ENCODE measurements at regions of chr2 and their contacts with region 1.

Region 1: DNA sequence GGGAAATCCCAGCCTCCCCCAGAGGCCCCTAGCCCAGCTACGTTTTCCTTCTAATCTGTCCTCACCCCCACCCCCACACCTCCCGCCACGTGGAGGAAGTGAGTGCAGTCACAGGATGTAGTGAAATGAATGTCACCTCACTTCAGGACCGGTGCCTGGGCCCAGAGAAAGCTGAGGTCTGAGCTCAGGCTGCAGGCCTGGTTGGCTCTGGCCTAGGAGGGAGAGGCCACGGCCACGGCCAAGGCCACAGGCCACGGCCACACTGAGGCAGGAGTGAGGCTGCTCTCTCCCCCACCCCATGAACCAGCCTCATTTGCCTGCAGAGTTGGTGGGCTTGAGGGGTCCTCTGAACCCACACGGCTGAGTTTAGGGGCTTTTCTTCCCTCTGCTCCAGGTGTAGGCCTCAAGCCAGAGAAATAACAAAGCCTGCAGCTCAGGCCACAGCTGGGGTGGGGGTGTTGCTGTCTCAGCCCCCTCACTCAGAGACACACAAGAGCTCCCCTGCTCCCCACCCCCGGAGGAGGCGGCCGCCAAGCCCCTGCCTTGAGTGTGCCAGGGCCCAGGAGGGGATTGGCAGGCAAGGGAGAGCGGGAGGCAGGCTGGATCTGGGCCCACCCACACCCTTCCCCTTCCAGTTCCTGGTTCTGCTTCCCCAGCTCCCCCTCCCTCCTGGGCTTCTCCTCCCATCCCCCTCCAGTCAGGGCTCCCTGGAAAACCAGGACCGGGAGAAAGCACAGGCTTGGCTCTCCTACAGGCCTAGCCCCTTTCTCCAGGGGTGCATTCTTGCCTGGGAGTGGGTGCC is 27.0 kb downstream of the DNMT3A start:
- DNase-seq: peak; percentile 35 to 79 (median 61)
- ATAC-seq: peak; percentile 87
- H3K4me3 ChIP-seq: peak overlapping the region; percentile 50
- H3K4me3 Mint-ChIP-seq: peak overlapping the region; percentile 70
- H3K27ac ChIP-seq: peak overlapping the region; percentile 77 to 84
- H3K27ac Mint-ChIP-seq: peak overlapping the region; percentile 90
- H3K4me1 ChIP-seq: peaks cover 71% of the 10 kb centered on the region
- H3K4me1 Mint-ChIP-seq: peaks cover 69% of the 10 kb centered on the region
- H3K27me3 ChIP-seq: no peaks in the 10 kb centered on the region
- H3K27me3 Mint-ChIP-seq: no peaks in the 10 kb centered on the region
- CTCF ChIP-seq: no peak

Region 2: GRCh38 chr2:25252281-25253105 is 62.2 kb before region 1 on chr2:
- CTCF ChIA-PET with region 1: no interaction called
- POLR2A ChIA-PET with region 1: interaction called, 8 read pairs
- intact Hi-C with region 1: loop called in 1 of 2 experiments (anchors 10 kb)
- DNase-seq: peak in 13 of 14 experiments; percentile 39 to 80 (median 57)
- ATAC-seq: peak; percentile 69
- H3K4me3 ChIP-seq: peak overlapping the region; percentile 80
- H3K4me3 Mint-ChIP-seq: peak overlapping the region; percentile 69
- H3K27ac ChIP-seq: peak overlapping the region; percentile 58 to 64
- H3K27ac Mint-ChIP-seq: peak overlapping the region; percentile 90
- H3K4me1 ChIP-seq: peaks cover 36% of the 10 kb centered on the region
- H3K4me1 Mint-ChIP-seq: peaks cover 47% of the 10 kb centered on the region
- H3K27me3 ChIP-seq: no peaks in the 10 kb centered on the region
- H3K27me3 Mint-ChIP-seq: no peaks in the 10 kb centered on the region
- CTCF ChIP-seq: no peak

Region 3: GRCh38 chr2:25294573-25295462 is 19.9 kb before region 1 on chr2:
- CTCF ChIA-PET with region 1: interaction called, 3 read pairs
- POLR2A ChIA-PET with region 1: interaction called, 21 read pairs
- intact Hi-C with region 1: no loop called
- DNase-seq: peak; percentile 54 to 93 (median 76)
- ATAC-seq: peak; percentile 87
- H3K4me3 ChIP-seq: peak overlapping the region; percentile 40
- H3K4me3 Mint-ChIP-seq: peak overlapping the region; percentile 88
- H3K27ac ChIP-seq: peak overlapping the region; percentile 90 to 91
- H3K27ac Mint-ChIP-seq: peak overlapping the region; percentile 99
- H3K4me1 ChIP-seq: peaks cover 68% of the 10 kb centered on the region
- H3K4me1 Mint-ChIP-seq: peaks cover 44% of the 10 kb centered on the region
- H3K27me3 ChIP-seq: no peaks in the 10 kb centered on the region
- H3K27me3 Mint-ChIP-seq: no peaks in the 10 kb centered on the region
- CTCF ChIP-seq: no peak

Region 4: DNA sequence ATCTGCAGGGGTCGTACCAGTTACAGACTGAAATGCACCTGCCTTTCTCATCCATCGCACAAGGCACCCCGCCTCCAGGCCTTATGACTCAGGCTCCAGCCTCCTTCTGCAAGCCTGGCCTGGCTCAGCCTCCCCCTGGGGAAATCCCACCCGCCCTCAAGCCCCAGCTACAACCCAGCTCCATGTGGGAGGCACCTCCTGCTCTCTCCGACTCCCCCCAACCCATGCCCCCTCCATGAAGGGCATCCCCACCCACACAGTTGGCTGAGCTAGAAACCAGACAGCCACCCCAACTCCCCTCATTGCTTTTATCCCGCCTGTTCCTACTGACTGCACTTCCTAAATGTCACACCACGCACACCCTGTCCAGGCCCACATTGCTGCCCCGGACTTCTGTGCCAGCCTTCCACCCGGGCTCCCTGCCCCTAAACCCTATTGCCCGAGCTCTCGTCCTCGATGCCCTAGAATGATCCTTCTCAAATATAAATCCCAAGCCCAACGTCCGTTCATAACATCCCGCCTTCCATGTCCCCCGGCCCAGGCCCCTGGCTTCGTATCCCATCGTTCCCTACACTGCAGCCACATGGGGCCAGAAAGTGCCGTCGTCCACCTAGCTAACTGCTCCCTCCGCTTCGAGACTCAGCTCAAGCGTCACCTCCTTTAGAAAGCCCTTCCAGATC is 17.1 kb after region 1 on chr2:
- CTCF ChIA-PET with region 1: interaction called, 3 read pairs
- POLR2A ChIA-PET with region 1: interaction called, 37 read pairs
- intact Hi-C with region 1: no loop called
- DNase-seq: no peak
- ATAC-seq: no peak
- H3K4me3 ChIP-seq: no peak overlapping the region
- H3K4me3 Mint-ChIP-seq: no peak overlapping the region
- H3K27ac ChIP-seq: no peak overlapping the region
- H3K27ac Mint-ChIP-seq: peak overlapping the region; percentile 46
- H3K4me1 ChIP-seq: peaks cover 67% of the 10 kb centered on the region
- H3K4me1 Mint-ChIP-seq: peaks cover 69% of the 10 kb centered on the region
- H3K27me3 ChIP-seq: no peaks in the 10 kb centered on the region
- H3K27me3 Mint-ChIP-seq: no peaks in the 10 kb centered on the region
- CTCF ChIP-seq: no peak

Region 5: DNA sequence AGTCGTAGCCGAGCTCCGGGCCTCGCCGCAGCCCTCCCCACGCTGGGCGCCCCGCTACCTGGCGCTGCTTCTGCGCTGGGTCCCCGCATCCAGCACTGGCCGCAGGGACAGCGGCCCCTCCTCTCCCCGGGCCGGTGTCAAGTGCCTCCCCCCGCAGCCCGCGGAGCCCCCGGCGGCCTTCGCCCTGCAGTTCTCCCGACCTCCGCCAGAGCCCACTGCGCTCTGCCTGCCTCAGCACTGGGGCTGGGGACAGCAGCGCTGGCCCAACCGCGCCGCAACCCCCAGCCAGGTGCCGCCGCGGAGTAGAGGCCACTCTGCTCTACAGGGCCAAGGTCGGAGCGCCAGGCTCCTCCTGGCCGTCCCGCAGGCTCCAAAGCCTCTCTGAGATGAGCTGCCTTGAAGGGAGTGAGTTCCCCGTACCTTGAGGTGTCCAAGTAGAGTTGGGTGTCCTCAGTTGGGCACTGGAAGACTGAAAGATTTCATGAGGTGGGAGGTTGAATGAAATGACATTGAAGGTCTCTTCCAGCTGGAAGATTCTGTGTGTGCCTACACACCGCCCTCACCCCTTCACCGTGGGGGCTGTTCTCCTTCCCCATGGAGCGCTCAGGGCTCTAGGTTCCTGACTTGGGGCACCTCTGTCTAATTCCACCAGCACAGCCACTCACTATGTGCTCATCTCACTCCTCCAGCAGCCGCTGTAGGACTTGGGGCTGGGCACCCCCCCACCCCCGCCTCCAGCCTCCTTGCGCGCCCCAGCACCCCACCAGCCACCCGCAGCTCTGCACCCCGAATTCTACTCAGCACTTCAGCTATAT is 27.9 kb after region 1 on chr2:
- CTCF ChIA-PET with region 1: interaction called, 4 read pairs
- POLR2A ChIA-PET with region 1: interaction called, 37 read pairs
- intact Hi-C with region 1: loop called in 1 of 2 experiments (anchors 2 kb)
- DNase-seq: peak; percentile 50 to 92 (median 70)
- ATAC-seq: peak; percentile 85
- H3K4me3 ChIP-seq: peak overlapping the region; percentile 34
- H3K4me3 Mint-ChIP-seq: peak overlapping the region; percentile 91
- H3K27ac ChIP-seq: no peak overlapping the region
- H3K27ac Mint-ChIP-seq: peak overlapping the region; percentile 24
- H3K4me1 ChIP-seq: peaks cover 37% of the 10 kb centered on the region
- H3K4me1 Mint-ChIP-seq: peaks cover 29% of the 10 kb centered on the region
- H3K27me3 ChIP-seq: peaks cover 0 to 2% of the 10 kb centered on the region in 2 experiments
- H3K27me3 Mint-ChIP-seq: no peaks in the 10 kb centered on the region
- CTCF ChIP-seq: peak; percentile 90

Region 6: GRCh38 chr2:25376750-25377621 is 62.3 kb after region 1 on chr2:
- CTCF ChIA-PET with region 1: interaction called, 11 read pairs
- POLR2A ChIA-PET with region 1: interaction called, 3 read pairs
- intact Hi-C with region 1: loop called in 1 of 2 experiments (anchors 5 kb)
- DNase-seq: peak; percentile 81 to 97 (median 90)
- ATAC-seq: peak; percentile 99
- H3K4me3 ChIP-seq: no peak overlapping the region
- H3K4me3 Mint-ChIP-seq: peak overlapping the region; percentile 73
- H3K27ac ChIP-seq: peak overlapping the region; percentile 48 to 80
- H3K27ac Mint-ChIP-seq: peak overlapping the region; percentile 98
- H3K4me1 ChIP-seq: peaks cover 40% of the 10 kb centered on the region
- H3K4me1 Mint-ChIP-seq: peaks cover 43% of the 10 kb centered on the region
- H3K27me3 ChIP-seq: no peaks in the 10 kb centered on the region
- H3K27me3 Mint-ChIP-seq: no peaks in the 10 kb centered on the region
- CTCF ChIP-seq: peak; percentile 97

Region 7: GRCh38 chr2:25586726-25587144 is 272.0 kb after region 1 on chr2:
- CTCF ChIA-PET with region 1: no interaction called
- POLR2A ChIA-PET with region 1: no interaction called
- intact Hi-C with region 1: no loop called
- DNase-seq: no peak
- ATAC-seq: no peak
- H3K4me3 ChIP-seq: no peak overlapping the region
- H3K4me3 Mint-ChIP-seq: no peak overlapping the region
- H3K27ac ChIP-seq: no peak overlapping the region
- H3K27ac Mint-ChIP-seq: no peak overlapping the region
- H3K4me1 ChIP-seq: peaks cover 2% of the 10 kb centered on the region
- H3K4me1 Mint-ChIP-seq: peaks cover under 1% of the 10 kb centered on the region
- H3K27me3 ChIP-seq: no peaks in the 10 kb centered on the region
- H3K27me3 Mint-ChIP-seq: no peaks in the 10 kb centered on the region
- CTCF ChIP-seq: no peak